Endothelial cell of umbilical vein (primary cell): ENCODE measurements at regions of chr1 and their contacts with region 1.

Region 1: GRCh38 chr1:91165033-91165654 is 143.3 kb upstream of the ZNF644 start:
- DNase-seq: peak; percentile 52
- H3K4me3 ChIP-seq: no peak overlapping the region
- H3K27ac ChIP-seq: no peak overlapping the region
- H3K4me1 ChIP-seq: no peaks in the 10 kb centered on the region
- H3K27me3 ChIP-seq: no peaks in the 10 kb centered on the region
- CTCF ChIP-seq: peak; percentile 97 to 98
- POLR2A ChIP-seq: no peak

Region 2: DNA sequence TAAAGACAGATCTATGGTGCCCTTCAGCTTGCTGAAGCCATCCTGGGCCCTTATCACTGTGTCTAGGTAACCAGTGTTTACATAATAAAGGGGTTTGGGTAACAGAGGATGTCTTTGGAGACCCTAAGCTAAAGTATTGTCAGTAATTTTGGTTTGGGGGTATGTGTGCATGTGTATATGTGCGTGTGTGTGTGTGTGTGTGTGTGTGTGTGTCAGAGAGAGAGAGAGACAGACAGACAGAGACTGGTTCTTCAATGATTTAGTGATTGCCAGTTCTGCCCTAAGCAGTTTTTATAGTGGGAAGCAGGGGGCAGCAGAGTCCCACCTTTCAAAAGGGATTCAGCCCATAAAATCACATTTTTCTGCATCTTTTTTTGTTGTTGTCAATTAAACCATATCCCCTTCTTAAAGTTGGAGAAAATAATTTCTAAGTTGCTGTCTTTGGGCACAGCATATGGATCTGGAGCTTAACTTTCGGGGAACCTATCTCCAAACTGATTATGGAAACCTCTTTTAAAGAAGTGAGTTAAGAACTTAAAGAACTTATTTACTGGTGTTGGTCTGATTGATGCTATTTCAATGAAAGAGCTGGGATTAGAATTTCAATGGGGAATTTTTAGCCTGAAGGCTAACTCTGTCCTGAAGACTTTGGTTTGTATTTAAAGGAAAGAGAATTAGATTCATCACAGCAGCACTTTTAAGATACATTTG is 1119.1 kb before region 1 on chr1:
- CTCF ChIA-PET with region 1: interaction called, 46 read pairs
- POLR2A ChIA-PET with region 1: no interaction called
- dilution Hi-C with region 1: no loop called
- intact Hi-C with region 1: loop called (anchors 1 kb)
- DNase-seq: peak; percentile 35
- H3K4me3 ChIP-seq: no peak overlapping the region
- H3K27ac ChIP-seq: no peak overlapping the region
- H3K4me1 ChIP-seq: no peaks in the 10 kb centered on the region
- H3K27me3 ChIP-seq: peaks cover 8 to 23% of the 10 kb centered on the region in 2 experiments
- CTCF ChIP-seq: peak; percentile 57 to 65
- POLR2A ChIP-seq: no peak

Region 3: DNA sequence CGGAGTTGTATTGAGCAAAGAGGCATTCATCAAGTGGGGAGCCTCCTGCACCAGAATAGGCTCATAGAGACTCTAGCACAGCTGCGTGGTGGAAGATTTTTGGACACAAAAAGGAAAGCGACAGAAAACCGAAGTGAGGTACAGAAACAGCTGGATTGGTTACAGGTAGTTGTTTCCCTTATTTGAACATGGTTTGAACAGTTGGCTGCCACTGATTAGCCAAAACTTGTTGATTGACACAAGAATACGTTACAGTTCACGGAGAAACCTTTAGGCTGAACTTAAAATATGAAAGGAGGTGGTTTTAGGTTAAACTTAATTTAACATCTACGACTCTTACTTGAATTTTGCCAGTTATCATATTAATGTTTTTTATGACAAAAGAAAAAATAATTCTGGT is 1081.1 kb before region 1 on chr1:
- CTCF ChIA-PET with region 1: no interaction called
- POLR2A ChIA-PET with region 1: no interaction called
- dilution Hi-C with region 1: no loop called
- intact Hi-C with region 1: no loop called
- DNase-seq: no peak
- H3K4me3 ChIP-seq: no peak overlapping the region
- H3K27ac ChIP-seq: no peak overlapping the region
- H3K4me1 ChIP-seq: no peaks in the 10 kb centered on the region
- H3K27me3 ChIP-seq: peaks cover 0 to 2% of the 10 kb centered on the region in 2 experiments
- CTCF ChIP-seq: no peak
- POLR2A ChIP-seq: no peak

Region 4: DNA sequence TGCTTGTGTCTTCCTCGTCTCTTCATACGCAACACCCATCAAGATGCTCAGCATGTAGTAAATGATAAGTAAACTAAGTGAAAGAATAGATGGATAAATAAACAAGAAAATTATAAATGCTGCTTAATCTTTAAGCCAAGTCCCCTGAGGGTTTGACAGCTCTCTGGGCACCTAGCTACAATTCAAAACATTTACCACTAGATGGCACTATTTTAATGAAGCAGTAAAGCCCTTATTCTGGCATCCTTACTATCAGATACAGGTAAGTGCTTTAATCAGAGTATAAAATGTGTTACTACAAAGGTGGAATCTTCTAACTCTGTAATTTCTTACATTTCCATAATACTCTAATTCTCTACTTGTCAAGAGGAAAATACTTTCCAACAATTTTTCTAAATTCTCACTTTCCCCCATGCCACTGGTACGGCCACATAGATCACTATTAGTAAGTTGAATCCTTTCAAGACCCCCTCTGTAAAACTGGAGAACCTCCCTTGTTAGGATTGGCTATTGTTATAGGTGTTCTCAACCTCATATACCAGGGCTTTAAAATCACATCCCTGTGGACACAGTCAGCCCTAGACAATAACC is 585.8 kb before region 1 on chr1:
- CTCF ChIA-PET with region 1: interaction called, 76 read pairs
- POLR2A ChIA-PET with region 1: no interaction called
- dilution Hi-C with region 1: no loop called
- intact Hi-C with region 1: loop called (anchors 1 kb)
- DNase-seq: peak; percentile 51
- H3K4me3 ChIP-seq: no peak overlapping the region
- H3K27ac ChIP-seq: no peak overlapping the region
- H3K4me1 ChIP-seq: no peaks in the 10 kb centered on the region
- H3K27me3 ChIP-seq: no peaks in the 10 kb centered on the region
- CTCF ChIP-seq: peak; percentile 36 to 46
- POLR2A ChIP-seq: no peak

Region 5: DNA sequence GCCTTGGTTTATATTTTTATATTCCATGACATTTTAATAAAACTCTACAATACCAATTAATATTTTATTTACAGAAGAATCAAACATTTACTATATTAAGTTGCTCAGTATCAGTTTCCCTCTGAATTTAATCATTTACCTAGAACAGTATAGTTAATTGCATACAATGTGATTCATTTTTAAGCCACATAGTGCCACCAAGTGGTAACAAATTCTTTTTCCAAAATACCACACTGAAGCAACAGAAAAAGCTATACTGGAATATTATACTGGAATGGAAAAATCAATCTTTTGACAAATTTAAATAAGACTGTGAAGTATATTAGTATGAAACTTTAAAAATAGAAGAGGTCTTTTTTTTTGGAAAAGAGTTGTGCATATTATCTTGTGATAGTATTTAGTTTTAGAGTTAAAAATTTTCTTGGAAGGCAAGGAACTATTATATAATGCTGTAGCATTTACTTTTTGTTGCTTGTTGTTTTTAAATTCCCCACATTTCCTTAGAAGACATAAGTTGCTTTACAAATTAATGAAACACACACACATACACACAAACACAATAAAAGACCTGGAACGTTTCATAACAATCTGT is 200.6 kb before region 1 on chr1:
- CTCF ChIA-PET with region 1: interaction called, 3 read pairs
- POLR2A ChIA-PET with region 1: no interaction called
- dilution Hi-C with region 1: no loop called
- intact Hi-C with region 1: loop called (anchors 10 kb)
- DNase-seq: peak; percentile 45
- H3K4me3 ChIP-seq: no peak overlapping the region
- H3K27ac ChIP-seq: no peak overlapping the region
- H3K4me1 ChIP-seq: peaks cover 3% of the 10 kb centered on the region
- H3K27me3 ChIP-seq: no peaks in the 10 kb centered on the region
- CTCF ChIP-seq: peak; percentile 9 to 11
- POLR2A ChIP-seq: no peak

Region 6: DNA sequence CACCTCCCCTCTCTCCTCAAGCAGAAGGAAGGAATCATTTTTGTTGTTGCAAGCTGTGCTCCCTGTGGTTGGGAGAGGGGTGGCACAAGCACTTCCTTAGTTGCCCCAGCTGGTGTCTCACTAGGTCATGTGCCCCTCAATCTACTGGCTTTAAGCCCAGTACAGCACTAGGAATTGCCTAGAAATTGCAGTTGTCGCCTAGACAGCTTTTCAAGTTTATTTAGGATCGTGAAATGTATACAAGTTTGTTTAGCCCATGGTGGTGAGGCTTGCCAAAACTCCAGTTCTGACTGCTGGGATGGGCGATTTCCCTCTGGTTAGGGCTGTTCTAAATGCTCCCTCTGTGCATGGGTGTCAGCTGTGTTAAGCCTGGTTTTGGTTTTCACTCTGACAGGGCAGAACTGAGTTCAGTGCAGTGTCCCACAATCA is 16.5 kb before region 1 on chr1:
- CTCF ChIA-PET with region 1: interaction called, 11 read pairs
- POLR2A ChIA-PET with region 1: no interaction called
- dilution Hi-C with region 1: no loop called
- intact Hi-C with region 1: no loop called
- DNase-seq: no peak
- H3K4me3 ChIP-seq: no peak overlapping the region
- H3K27ac ChIP-seq: no peak overlapping the region
- H3K4me1 ChIP-seq: no peaks in the 10 kb centered on the region
- H3K27me3 ChIP-seq: no peaks in the 10 kb centered on the region
- CTCF ChIP-seq: no peak
- POLR2A ChIP-seq: no peak

Region 7: DNA sequence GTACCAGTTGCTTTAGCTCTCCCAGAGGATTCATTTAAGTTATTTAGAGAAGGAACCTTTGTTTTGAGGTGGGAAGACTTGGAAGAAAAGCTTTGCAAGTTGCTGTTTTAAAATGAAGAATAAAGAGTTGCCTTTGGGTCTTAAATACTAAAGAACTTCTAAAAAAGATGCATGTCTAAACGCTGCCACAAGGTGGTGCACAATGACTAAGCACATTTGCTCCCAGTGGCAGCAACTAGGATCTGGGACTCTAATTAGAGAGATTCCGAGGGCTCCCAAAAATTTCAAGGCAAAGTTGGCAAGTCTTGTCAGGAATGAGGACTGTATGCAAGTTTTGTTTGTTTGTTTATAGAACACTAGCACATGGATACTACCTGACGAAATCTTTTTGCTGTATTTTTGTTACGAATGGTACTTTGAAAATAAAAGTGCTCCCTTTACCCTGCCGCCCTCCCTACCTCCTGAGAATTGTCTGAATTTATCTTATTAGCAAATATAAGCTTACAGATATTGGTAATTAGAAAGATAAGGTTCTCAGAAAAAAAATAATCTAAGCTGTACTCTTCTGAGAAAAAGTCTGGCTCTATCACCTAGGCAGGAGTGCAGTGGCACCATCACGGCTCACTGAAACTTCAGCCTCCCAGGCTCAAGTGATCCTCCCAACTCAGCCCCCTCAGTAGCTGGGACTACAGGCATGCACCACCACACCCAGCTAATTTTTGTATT is 117.7 kb after region 1 on chr1:
- CTCF ChIA-PET with region 1: interaction called, 502 read pairs
- POLR2A ChIA-PET with region 1: no interaction called
- dilution Hi-C with region 1: no loop called
- intact Hi-C with region 1: loop called (anchors 1 kb)
- DNase-seq: peak; percentile 69
- H3K4me3 ChIP-seq: no peak overlapping the region
- H3K27ac ChIP-seq: no peak overlapping the region
- H3K4me1 ChIP-seq: no peaks in the 10 kb centered on the region
- H3K27me3 ChIP-seq: peaks cover 5 to 7% of the 10 kb centered on the region in 2 experiments
- CTCF ChIP-seq: peak; percentile 64 to 66
- POLR2A ChIP-seq: no peak

Region 8: GRCh38 chr1:91511386-91511785 is 346.2 kb after region 1 on chr1:
- CTCF ChIA-PET with region 1: interaction called, 12 read pairs
- POLR2A ChIA-PET with region 1: no interaction called
- dilution Hi-C with region 1: no loop called
- intact Hi-C with region 1: no loop called
- DNase-seq: peak; percentile 57
- H3K4me3 ChIP-seq: no peak overlapping the region
- H3K27ac ChIP-seq: no peak overlapping the region
- H3K4me1 ChIP-seq: no peaks in the 10 kb centered on the region
- H3K27me3 ChIP-seq: no peaks in the 10 kb centered on the region
- CTCF ChIP-seq: peak; percentile 24 to 43
- POLR2A ChIP-seq: no peak